Sigmoid colon (tissue), 7 donors: ENCODE measurements at regions of chr3 and their contacts with region 1.

Region 1: DNA sequence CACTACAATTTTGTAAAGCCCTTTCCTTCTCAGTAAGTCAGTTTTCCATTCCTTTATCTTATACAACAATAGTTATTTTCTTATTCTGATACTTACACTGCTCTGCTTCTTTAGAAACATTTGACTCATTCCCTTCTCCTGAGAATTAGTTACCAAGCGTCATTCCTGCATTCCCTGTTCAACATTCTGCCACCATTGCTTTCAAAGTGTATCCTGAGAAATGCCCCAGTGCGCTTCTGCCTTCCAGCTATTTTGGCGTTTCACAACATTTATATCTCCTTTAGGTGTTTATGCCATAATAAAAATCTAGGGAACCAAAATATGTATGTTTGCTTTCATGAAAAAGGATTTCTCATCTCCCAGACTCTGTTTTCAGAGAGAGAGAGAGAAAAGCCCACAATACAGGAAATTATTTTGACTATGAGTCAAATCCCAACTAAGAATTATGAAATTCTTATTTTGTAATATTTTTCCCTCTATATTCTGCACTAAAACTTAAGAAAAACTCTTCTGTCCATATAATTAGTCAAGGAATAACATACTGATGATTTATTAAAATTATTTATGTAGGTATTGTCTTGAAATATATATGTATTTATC is 118.2 kb upstream of the RAP2B start:
- DNase-seq: no peak
- H3K4me3 ChIP-seq: no peak overlapping the region
- H3K27ac ChIP-seq: no peak overlapping the region
- H3K4me1 ChIP-seq: peaks cover 0 to 10% (median 3%) of the 10 kb centered on the region in 4 donors
- H3K27me3 ChIP-seq: no peaks in the 10 kb centered on the region
- CTCF ChIP-seq: no peak
- EP300 ChIP-seq: no peak
- POLR2A ChIP-seq: no peak

Region 2: DNA sequence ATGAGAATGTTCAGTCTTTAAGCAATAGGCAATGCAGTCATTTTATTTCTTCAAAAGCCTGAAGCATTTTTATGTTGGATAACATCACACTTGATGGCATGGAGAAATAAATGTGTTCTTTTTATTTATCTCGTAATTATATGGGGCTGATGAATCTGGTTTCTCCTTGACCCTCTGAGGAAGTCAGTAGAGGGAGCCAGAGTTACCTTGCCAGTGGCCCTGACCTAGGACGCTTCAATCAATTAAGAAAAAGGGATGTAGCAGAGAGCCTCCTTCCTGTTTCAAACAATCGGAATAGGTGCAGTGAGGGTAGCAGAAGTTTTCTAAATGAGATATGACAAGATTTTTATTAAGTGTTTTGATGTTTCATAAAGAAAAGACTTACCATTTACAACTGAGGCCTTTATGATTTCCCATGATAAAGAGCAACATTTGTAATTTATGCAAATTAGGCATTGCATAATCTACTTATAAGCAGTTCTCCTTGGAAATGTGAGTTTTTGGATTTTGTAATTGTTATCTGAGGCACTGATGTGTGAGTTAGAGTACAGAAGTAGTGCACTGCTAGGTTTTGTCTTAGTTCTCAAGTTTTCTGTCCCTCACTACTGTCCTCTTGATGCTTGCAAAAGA is 247.3 kb after region 1 on chr3:
- intact Hi-C with region 1: loop called (anchors 10 kb)
- DNase-seq: no peak
- H3K4me3 ChIP-seq: no peak overlapping the region
- H3K27ac ChIP-seq: no peak overlapping the region
- H3K4me1 ChIP-seq: no peaks in the 10 kb centered on the region
- H3K27me3 ChIP-seq: no peaks in the 10 kb centered on the region
- CTCF ChIP-seq: peak in 1 of 4 experiments; percentile 31
- EP300 ChIP-seq: no peak
- POLR2A ChIP-seq: no peak

Region 3: DNA sequence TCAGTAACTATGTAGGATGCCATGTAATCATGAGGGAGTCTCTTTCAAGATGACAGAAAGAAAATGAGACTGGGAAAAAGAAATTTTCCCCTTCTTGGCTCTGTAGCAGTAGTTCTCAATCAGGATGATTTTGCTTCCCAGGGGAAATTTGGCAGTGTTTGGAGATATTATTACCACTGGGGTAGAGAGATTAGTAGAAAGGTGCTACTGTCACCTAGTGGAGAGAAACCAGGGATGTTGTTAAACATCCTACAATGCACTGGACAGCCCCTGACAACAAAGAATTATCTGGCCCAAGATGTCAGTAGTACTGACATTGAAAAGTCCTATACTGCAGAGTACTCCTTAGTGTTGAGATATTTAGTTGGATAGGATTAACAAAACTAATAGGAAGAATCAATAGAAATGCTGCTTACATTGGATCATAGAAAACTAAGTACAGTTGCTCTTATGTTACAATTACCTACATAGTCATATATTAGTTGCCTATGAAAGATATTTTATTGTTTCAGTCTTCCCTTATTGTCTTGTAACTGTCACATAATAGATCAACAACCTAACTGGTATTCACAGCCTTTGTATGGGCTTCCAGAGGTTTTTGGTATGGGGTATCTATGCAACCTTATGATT is 551.5 kb after region 1 on chr3:
- intact Hi-C with region 1: loop called (anchors 5 kb)
- DNase-seq: no peak
- H3K4me3 ChIP-seq: no peak overlapping the region
- H3K27ac ChIP-seq: no peak overlapping the region
- H3K4me1 ChIP-seq: no peaks in the 10 kb centered on the region
- H3K27me3 ChIP-seq: no peaks in the 10 kb centered on the region
- CTCF ChIP-seq: peak in 3 of 4 experiments; percentile 25 to 38 (median 36)
- EP300 ChIP-seq: no peak
- POLR2A ChIP-seq: no peak

Region 4: DNA sequence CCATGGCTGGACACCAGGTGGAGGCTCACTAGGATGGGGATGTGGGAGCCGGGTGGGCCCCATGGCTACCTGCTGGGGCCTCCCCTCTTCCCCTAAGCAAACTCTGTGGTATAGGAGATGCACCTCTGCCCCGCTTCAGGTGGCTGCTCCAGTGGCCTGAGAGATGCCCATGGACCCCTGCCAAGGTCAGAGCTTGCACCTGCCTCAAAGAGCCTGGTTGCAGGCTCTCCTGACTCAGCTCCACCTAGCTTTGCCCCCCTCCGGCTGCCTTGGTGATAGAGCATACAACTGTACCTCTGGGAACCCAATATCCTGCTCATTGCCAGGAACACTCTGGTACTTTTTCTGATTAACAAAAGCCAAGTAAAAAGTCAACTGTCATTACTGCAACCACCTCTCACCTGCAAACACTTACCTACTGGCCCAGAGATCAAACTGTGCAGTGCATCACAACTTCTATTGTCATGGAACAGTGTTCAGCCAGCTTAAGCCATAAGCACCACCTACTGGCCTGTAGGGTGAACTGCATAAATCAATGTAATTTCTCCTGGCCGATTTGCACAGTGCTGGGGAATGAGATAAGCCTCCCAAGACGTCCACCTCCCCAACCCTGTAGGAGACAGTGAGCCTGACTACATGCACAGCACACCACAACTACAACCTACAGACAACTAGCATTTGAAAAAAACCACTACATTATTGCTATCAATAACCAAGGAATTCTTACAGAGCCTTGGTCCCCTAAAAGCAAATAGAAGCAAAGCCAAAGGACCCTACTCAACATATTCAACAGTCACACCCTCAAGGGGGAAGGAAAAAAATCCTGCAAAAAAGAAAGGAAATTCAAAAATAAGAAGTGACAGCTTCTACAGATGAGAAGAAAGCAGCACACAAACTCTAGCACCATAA is 725.0 kb after region 1 on chr3:
- intact Hi-C with region 1: loop called (anchors 5 kb)
- DNase-seq: peak; percentile 60
- H3K4me3 ChIP-seq: no peak overlapping the region
- H3K27ac ChIP-seq: no peak overlapping the region
- H3K4me1 ChIP-seq: no peaks in the 10 kb centered on the region
- H3K27me3 ChIP-seq: no peaks in the 10 kb centered on the region
- CTCF ChIP-seq: peak; percentile 35 to 80 (median 76)
- EP300 ChIP-seq: no peak
- POLR2A ChIP-seq: no peak

Region 5: GRCh38 chr3:154209513-154210481 is 1166.0 kb after region 1 on chr3:
- intact Hi-C with region 1: loop called (anchors 5 kb)
- DNase-seq: no peak
- H3K4me3 ChIP-seq: no peak overlapping the region
- H3K27ac ChIP-seq: no peak overlapping the region
- H3K4me1 ChIP-seq: no peaks in the 10 kb centered on the region
- H3K27me3 ChIP-seq: no peaks in the 10 kb centered on the region
- CTCF ChIP-seq: no peak
- EP300 ChIP-seq: no peak
- POLR2A ChIP-seq: no peak